GM18951 (cell line): ENCODE measurements at regions of chr20 and their contacts with region 1.

Region 1: DNA sequence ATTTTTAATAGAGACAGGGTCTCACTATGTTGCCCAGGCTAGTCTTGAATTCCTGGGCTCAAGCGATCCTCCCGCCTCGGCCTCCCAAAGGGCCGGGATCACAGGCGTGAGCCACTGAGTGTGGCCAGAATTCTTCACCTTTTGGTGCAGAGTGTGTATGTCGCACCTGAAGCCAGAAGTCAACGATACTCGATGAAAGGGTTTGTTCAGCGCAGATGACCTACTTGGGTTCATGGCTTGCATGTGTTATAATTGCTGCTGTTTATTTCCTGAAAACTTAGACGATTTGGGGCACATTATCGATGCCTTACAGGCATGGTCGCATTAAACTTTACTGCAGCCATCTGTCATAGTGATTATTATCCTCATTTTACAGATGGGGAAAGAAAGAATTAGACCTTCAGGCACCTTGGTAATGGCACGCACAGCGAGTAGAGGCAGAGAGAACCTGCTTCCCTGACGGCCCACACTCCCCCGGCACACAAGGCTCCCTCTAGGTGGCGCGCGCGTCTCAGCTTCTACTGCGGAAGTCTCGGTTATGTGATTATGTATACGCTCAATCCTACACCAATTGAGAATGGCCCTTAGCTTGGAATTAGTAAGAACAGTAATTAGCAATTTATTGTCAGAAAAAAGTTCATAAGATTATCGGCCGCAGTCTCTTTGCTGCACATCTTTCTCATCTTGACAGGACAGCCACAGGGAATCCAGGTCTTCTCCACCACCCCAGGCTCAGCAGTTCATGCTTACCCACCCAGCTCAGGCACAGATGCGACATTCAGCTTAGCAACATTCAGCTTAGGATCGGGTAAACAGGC is 212.8 kb upstream of the PROKR2 start:
- POLR2A ChIP-seq: no peak

Region 2: GRCh38 chr20:5933802-5934436 is 404.4 kb after region 1 on chr20:
- in situ Hi-C with region 1: loop called (anchors 10 kb)
- POLR2A ChIP-seq: no peak

Region 3: GRCh38 chr20:6081236-6081635 is 551.7 kb after region 1 on chr20:
- in situ Hi-C with region 1: loop called (anchors 5 kb)
- POLR2A ChIP-seq: no peak